IMR-90 (cell line): ENCODE measurements at regions of chr2 and their contacts with region 1.

Region 1: GRCh38 chr2:25664183-25664964 is 9.0 kb downstream of the DTNB start:
- DNase-seq: peak; percentile 74
- ATAC-seq: peak; percentile 98
- H3K4me3 ChIP-seq: no peak overlapping the region
- H3K27ac ChIP-seq: no peak overlapping the region
- H3K4me1 ChIP-seq: no peaks in the 10 kb centered on the region
- H3K27me3 ChIP-seq: no peaks in the 10 kb centered on the region; the same call in 1 of the 2 replicates
- CTCF ChIP-seq: peak; percentile 86
- POLR2A ChIP-seq: 0 out of 2 replicates have a peak, but pooled peaks have one; percentile 24
- RAD21 ChIP-seq: peak; percentile 90

Region 2: GRCh38 chr2:25309402-25309801 is 355.0 kb before region 1 on chr2:
- CTCF ChIA-PET with region 1: no interaction called
- POLR2A ChIA-PET with region 1: no interaction called
- dilution Hi-C with region 1: no loop called
- in situ Hi-C with region 1: no loop called
- intact Hi-C with region 1: loop called (anchors 10 kb)
- DNase-seq: peak; percentile 50
- ATAC-seq: peak; percentile 68
- H3K4me3 ChIP-seq: no peak overlapping the region
- H3K27ac ChIP-seq: no peak overlapping the region
- H3K4me1 ChIP-seq: peaks cover 1% of the 10 kb centered on the region; the same call in 1 of the 2 replicates
- H3K27me3 ChIP-seq: no peaks in the 10 kb centered on the region
- CTCF ChIP-seq: peak; percentile 51
- POLR2A ChIP-seq: no peak
- RAD21 ChIP-seq: peak; percentile 63

Region 3: GRCh38 chr2:25362049-25362433 is 302.3 kb before region 1 on chr2:
- CTCF ChIA-PET with region 1: interaction called, 6 read pairs
- POLR2A ChIA-PET with region 1: no interaction called
- dilution Hi-C with region 1: no loop called
- in situ Hi-C with region 1: no loop called
- intact Hi-C with region 1: loop called (anchors 5 kb)
- DNase-seq: peak; percentile 88
- ATAC-seq: peak; percentile 99
- H3K4me3 ChIP-seq: peak overlapping the region; percentile 32
- H3K27ac ChIP-seq: no peak overlapping the region
- H3K4me1 ChIP-seq: no peaks in the 10 kb centered on the region
- H3K27me3 ChIP-seq: no peaks in the 10 kb centered on the region; the same call in 1 of the 2 replicates
- CTCF ChIP-seq: peak; percentile 93
- POLR2A ChIP-seq: no peak; the same call in 1 of the 2 replicates
- RAD21 ChIP-seq: peak; percentile 48

Region 4: DNA sequence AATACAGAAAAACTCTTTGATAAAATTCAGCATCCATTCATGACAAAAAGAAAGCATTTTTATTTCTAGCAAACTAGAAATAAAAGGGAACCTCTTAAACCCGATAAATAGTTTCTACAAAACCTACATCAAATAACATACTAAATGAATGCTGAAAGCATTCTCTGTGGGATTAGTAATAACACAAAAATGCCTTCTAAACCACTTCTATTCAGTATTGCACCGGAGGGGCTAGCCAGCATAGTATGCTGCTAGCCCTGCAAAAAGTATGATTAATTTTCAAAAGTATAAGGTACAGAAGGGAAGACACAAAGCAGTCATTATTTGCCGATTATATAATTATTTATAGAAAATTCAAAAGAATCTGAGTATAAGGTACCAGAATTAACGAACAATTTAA is 136.2 kb before region 1 on chr2:
- CTCF ChIA-PET with region 1: no interaction called
- POLR2A ChIA-PET with region 1: no interaction called
- dilution Hi-C with region 1: no loop called
- in situ Hi-C with region 1: no loop called
- intact Hi-C with region 1: loop called (anchors 1 kb)
- DNase-seq: peak; percentile 76
- ATAC-seq: peak; percentile 98
- H3K4me3 ChIP-seq: no peak overlapping the region
- H3K27ac ChIP-seq: no peak overlapping the region
- H3K4me1 ChIP-seq: no peaks in the 10 kb centered on the region
- H3K27me3 ChIP-seq: no peaks in the 10 kb centered on the region
- CTCF ChIP-seq: no peak
- POLR2A ChIP-seq: no peak
- RAD21 ChIP-seq: no peak

Region 5: DNA sequence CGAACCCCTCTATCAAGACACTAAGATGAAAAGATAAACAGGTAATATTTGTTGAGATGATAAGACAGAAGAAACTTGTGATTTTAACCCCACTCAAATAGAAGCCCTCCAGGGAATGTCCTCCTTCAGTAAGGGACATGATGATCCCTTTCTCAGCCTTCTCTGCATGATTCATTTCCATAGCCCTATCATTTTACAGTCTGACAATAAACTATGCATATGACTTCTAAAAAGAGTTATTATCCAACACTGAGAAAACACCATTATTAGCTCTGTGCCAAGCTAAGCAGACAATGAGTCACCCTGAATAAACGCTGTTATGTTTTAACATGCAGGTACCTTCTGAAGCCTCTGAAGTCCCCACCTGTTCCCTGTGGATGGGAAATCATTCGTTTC is 45.7 kb before region 1 on chr2:
- CTCF ChIA-PET with region 1: interaction called, 14 read pairs
- POLR2A ChIA-PET with region 1: no interaction called
- dilution Hi-C with region 1: no loop called
- in situ Hi-C with region 1: loop called (anchors 5 kb)
- intact Hi-C with region 1: no loop called
- DNase-seq: peak; percentile 78
- ATAC-seq: peak; percentile 58
- H3K4me3 ChIP-seq: no peak overlapping the region
- H3K27ac ChIP-seq: no peak overlapping the region
- H3K4me1 ChIP-seq: peaks cover 4% of the 10 kb centered on the region
- H3K27me3 ChIP-seq: no peaks in the 10 kb centered on the region
- CTCF ChIP-seq: no peak
- POLR2A ChIP-seq: no peak
- RAD21 ChIP-seq: no peak

Region 6: GRCh38 chr2:26521054-26521912 is 856.9 kb after region 1 on chr2:
- CTCF ChIA-PET with region 1: no interaction called
- POLR2A ChIA-PET with region 1: no interaction called
- dilution Hi-C with region 1: no loop called
- in situ Hi-C with region 1: no loop called
- intact Hi-C with region 1: no loop called
- DNase-seq: no peak
- ATAC-seq: no peak
- H3K4me3 ChIP-seq: no peak overlapping the region
- H3K27ac ChIP-seq: no peak overlapping the region
- H3K4me1 ChIP-seq: no peaks in the 10 kb centered on the region
- H3K27me3 ChIP-seq: peaks cover 59% of the 10 kb centered on the region
- CTCF ChIP-seq: 0 out of 2 replicates have a peak, but pooled peaks have one; percentile 16
- POLR2A ChIP-seq: no peak
- RAD21 ChIP-seq: no peak